CD14-positive monocyte (primary cell): ENCODE measurements at regions of chr17 and their contacts with region 1.

Region 1: DNA sequence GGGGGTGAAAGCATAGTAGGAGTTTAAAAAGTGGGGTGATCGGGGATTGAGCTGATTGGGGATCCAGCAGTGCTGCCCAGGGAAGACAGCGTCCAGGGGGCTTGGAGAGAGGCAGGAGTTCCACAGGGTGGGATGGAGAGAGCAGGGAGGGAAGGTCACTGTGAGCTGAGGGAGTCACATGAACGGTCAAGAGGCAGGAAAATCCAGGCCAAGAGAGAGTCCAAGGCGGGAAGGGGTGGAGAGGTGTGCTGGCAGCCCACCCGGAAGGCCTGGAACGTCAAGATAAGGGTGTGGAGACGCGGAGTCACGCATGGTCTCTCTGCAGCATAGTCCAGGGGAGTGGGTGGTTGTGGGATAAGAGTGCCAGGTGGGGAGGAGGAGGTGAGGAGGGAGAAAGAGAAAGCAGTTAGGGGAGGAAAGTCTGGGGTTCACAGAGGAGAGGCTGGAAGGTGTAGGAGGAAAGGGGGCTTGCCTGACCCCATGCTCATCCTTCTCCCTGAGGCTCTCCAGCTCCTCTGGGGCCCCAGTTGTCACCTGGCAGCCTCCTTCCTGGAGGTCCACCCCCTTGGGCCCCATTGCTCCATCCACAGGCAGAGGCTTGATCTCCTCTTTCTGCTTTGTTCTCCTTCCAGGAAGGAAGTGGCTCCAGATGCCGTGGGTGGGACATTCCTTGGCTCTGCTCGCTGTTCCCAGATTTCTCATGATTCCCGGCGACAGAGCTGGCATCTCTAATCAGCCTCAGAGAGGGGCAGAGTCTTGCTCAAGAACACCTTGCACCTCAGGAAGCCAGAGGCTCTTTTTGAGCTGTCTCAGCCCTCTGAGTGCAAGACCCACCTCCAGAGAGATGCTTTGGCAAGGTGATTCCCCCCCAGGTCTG is 28.7 kb downstream of the CCR7 start:
- DNase-seq: no peak
- H3K4me3 ChIP-seq: no peak overlapping the region
- H3K4me3 Mint-ChIP-seq: no peak overlapping the region
- H3K27ac ChIP-seq: no peak overlapping the region
- H3K27ac Mint-ChIP-seq: peak overlapping the region in 1 of 7 donors; percentile 13
- H3K4me1 ChIP-seq: peaks cover 0 to 8% of the 10 kb centered on the region in 2 donors
- H3K4me1 Mint-ChIP-seq: peaks cover 15% of the 10 kb centered on the region
- H3K27me3 ChIP-seq: no peaks in the 10 kb centered on the region
- H3K27me3 Mint-ChIP-seq: peaks cover 4 to 11% (median 10%) of the 10 kb centered on the region in 3 donors
- CTCF ChIP-seq: no peak

Region 2: GRCh38 chr17:40402668-40403067 is 133.9 kb before region 1 on chr17:
- intact Hi-C with region 1: loop called in 1 of 2 experiments (anchors 10 kb)
- DNase-seq: no peak
- H3K4me3 ChIP-seq: no peak overlapping the region
- H3K4me3 Mint-ChIP-seq: no peak overlapping the region
- H3K27ac ChIP-seq: no peak overlapping the region
- H3K27ac Mint-ChIP-seq: no peak overlapping the region
- H3K4me1 ChIP-seq: no peaks in the 10 kb centered on the region
- H3K4me1 Mint-ChIP-seq: no peaks in the 10 kb centered on the region
- H3K27me3 ChIP-seq: no peaks in the 10 kb centered on the region
- H3K27me3 Mint-ChIP-seq: no peaks in the 10 kb centered on the region
- CTCF ChIP-seq: no peak

Region 3: GRCh38 chr17:40457964-40458791 is 78.4 kb before region 1 on chr17:
- intact Hi-C with region 1: no loop called
- DNase-seq: no peak
- H3K4me3 ChIP-seq: no peak overlapping the region
- H3K4me3 Mint-ChIP-seq: no peak overlapping the region
- H3K27ac ChIP-seq: no peak overlapping the region
- H3K27ac Mint-ChIP-seq: peak overlapping the region in 1 of 7 donors; percentile 27
- H3K4me1 ChIP-seq: no peaks in the 10 kb centered on the region
- H3K4me1 Mint-ChIP-seq: no peaks in the 10 kb centered on the region
- H3K27me3 ChIP-seq: no peaks in the 10 kb centered on the region
- H3K27me3 Mint-ChIP-seq: peaks cover 4 to 12% (median 7%) of the 10 kb centered on the region in 3 donors
- CTCF ChIP-seq: no peak

Region 4: GRCh38 chr17:40582328-40582901 is 45.9 kb after region 1 on chr17:
- intact Hi-C with region 1: no loop called
- DNase-seq: peak in 2 of 3 donors; percentile 4 to 25
- H3K4me3 ChIP-seq: no peak overlapping the region
- H3K4me3 Mint-ChIP-seq: peak overlapping the region in 1 of 2 donors; percentile 10
- H3K27ac ChIP-seq: no peak overlapping the region
- H3K27ac Mint-ChIP-seq: peak overlapping the region in 1 of 7 donors; percentile 56
- H3K4me1 ChIP-seq: peaks cover 6 to 9% of the 10 kb centered on the region in 2 donors
- H3K4me1 Mint-ChIP-seq: peaks cover 11% of the 10 kb centered on the region
- H3K27me3 ChIP-seq: no peaks in the 10 kb centered on the region
- H3K27me3 Mint-ChIP-seq: peaks cover 5 to 10% (median 6%) of the 10 kb centered on the region in 3 donors
- CTCF ChIP-seq: no peak

Region 5: DNA sequence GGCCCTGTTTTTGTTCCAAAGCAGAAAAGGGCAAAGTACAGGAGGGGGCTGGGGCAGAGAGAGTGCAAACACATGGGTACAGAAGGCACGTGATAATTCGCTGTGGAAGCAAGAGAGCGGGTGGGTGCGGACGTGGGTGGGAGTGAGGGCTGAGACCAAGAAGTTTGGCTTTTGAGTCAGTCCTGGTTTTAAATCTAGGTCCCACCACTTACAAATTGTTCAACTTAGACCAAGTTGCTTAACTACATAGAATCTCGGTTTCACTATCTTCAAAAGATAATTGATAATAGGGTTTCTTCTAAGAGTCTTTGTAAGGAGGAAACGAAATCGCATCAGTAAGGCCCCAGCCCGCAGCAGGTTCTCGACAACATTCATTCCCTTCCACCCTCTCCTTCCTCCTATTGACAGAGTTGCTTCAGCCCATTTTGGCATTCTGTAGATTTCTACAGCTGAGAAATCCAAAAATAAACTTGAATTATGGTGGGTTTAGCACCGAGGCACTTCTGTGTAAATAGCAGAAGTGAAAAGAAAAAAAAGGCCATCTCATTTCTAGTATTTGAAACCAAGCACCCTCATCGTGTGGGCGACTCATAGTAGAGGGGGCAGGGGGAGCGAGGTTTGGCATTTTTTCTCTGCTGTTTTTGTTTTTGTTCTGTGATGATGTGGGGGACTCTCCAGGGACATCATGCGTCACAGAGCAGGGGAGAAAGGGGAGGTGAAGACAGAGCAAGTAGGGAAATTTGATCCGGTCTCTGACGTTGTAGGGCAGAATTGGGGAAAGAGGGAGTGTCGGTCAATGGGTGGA is 62.3 kb after region 1 on chr17:
- intact Hi-C with region 1: no loop called
- DNase-seq: peak in 2 of 3 donors; percentile 16 to 77
- H3K4me3 ChIP-seq: no peak overlapping the region
- H3K4me3 Mint-ChIP-seq: peak overlapping the region; percentile 50 to 51
- H3K27ac ChIP-seq: no peak overlapping the region
- H3K27ac Mint-ChIP-seq: peak overlapping the region in 6 of 7 donors; percentile 51 to 66 (median 57)
- H3K4me1 ChIP-seq: peaks cover 11 to 13% of the 10 kb centered on the region in 2 donors
- H3K4me1 Mint-ChIP-seq: peaks cover 18% of the 10 kb centered on the region
- H3K27me3 ChIP-seq: no peaks in the 10 kb centered on the region
- H3K27me3 Mint-ChIP-seq: no peaks in the 10 kb centered on the region
- CTCF ChIP-seq: no peak